ENCODE measurements at regions of chr9 and their contacts with region 1.

Region 1: GRCh38 chr9:26955921-26956859 is at the start of gene IFT74:
- DNase-seq: peak; percentile 95
- ATAC-seq: peak; percentile 100
- H3K4me3 ChIP-seq: peak within 1 kb of the TSS; percentile 64 to 86 (median 83)
- H3K4me3 Mint-ChIP-seq: peak within 1 kb of the TSS; percentile 98
- H3K27ac ChIP-seq: peak within 1 kb of the TSS; percentile 60 to 82
- H3K27ac Mint-ChIP-seq: peak within 1 kb of the TSS; percentile 98
- H3K4me1 ChIP-seq: peaks cover 12 to 13% of the 10 kb centered on the region in 2 donors
- H3K4me1 Mint-ChIP-seq: peaks cover 32% of the 10 kb centered on the region
- H3K27me3 ChIP-seq: no peaks in the 10 kb centered on the region
- H3K27me3 Mint-ChIP-seq: no peaks in the 10 kb centered on the region
- CTCF ChIP-seq: no peak
- total RNA-seq, gene IFT74: 19.1 and 22.6 TPM in 2 replicates

Region 2: DNA sequence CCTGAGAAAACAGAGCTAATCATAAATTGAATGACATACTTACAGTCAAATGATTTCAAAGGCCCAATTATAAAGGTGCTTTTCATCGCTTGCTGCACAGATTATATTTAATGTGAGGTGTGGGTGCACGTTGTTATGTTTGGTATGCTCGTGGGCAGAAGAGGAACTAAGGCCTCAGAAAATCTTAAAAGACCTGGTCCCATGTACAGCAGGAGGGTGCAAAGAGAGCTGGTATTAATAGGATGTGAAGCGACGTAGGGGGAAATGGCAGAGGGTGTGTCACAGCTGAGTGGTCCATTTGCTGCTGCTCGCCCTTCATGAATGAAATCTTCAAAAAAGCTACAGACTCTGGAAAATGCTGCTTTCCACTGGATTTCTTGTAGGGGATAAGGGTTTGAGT is 527.4 kb after region 1 on chr9:
- CTCF ChIA-PET with region 1: no interaction called
- POLR2A ChIA-PET with region 1: no interaction called
- intact Hi-C with region 1: loop called (anchors 5 kb)
- DNase-seq: peak; percentile 67
- ATAC-seq: peak; percentile 69
- H3K4me3 ChIP-seq: peak overlapping the region in 2 of 5 experiments; percentile 30 to 36
- H3K4me3 Mint-ChIP-seq: peak overlapping the region; percentile 74
- H3K27ac ChIP-seq: peak overlapping the region; percentile 63 to 82
- H3K27ac Mint-ChIP-seq: peak overlapping the region; percentile 88
- H3K4me1 ChIP-seq: peaks cover 92 to 93% of the 10 kb centered on the region in 2 donors
- H3K4me1 Mint-ChIP-seq: peaks cover 87% of the 10 kb centered on the region
- H3K27me3 ChIP-seq: no peaks in the 10 kb centered on the region
- H3K27me3 Mint-ChIP-seq: no peaks in the 10 kb centered on the region
- CTCF ChIP-seq: no peak

Measured in B cell (primary cell).